Mammary epithelial cell (primary cell): ENCODE measurements at regions of chr1 and their contacts with region 1.

Region 1: GRCh38 chr1:201530741-201531531 is 8.0 kb upstream of the NAV1 start:
- DNase-seq: peak; percentile 70
- H3K4me3 ChIP-seq: no peak overlapping the region
- H3K27ac ChIP-seq: no peak overlapping the region
- H3K4me1 ChIP-seq: peaks cover 15% of the 10 kb centered on the region
- H3K27me3 ChIP-seq: no peaks in the 10 kb centered on the region
- CTCF ChIP-seq: peak; percentile 86 to 88

Region 2: GRCh38 chr1:201660931-201661822 is 130.2 kb after region 1 on chr1:
- CTCF ChIA-PET with region 1: no interaction called
- dilution Hi-C with region 1: no loop called
- in situ Hi-C with region 1: no loop called
- intact Hi-C with region 1: no loop called
- DNase-seq: no peak
- H3K4me3 ChIP-seq: no peak overlapping the region
- H3K27ac ChIP-seq: no peak overlapping the region
- H3K4me1 ChIP-seq: no peaks in the 10 kb centered on the region
- H3K27me3 ChIP-seq: no peaks in the 10 kb centered on the region
- CTCF ChIP-seq: no peak

Region 3: DNA sequence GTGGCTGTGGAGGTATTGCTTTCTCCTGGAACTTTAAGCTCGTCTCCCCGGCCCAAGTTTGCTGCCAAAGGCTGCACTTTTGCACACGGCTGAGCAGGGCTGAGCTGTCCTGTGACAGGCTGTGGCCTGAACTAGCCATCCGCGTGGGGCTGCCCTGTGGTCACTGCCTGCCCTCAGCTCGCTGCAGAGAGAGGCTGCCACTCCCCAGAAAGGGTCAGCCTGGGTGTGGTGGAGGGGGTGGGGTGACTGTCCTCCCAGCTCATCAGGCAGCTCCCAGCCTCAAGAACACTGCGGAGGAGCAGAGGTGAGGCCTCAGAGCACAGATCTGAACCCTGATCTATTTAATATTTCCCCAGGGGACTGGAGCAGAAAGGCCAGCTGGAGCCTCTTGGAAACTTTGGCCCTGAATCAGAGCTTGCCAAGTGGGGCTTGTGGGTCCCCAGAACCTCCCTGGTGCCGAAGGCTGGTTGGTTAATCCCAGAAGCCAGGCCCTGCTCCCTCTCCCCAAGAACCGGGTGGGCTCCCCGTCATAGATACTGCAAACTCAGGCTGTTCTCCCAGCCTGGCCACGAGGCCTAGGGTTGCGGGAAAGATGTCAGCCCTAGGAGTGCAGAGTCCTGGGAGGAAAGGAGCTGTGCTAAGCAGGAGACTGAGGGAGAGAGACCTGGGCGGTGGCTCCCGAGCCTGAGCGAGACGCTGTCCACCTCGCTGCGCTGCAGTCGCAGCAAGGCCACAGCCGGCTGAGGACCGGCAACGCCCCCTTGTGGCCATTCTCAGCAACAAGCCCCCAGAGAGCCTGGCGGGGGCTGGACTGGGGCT is 172.9 kb after region 1 on chr1:
- CTCF ChIA-PET with region 1: no interaction called
- dilution Hi-C with region 1: no loop called
- in situ Hi-C with region 1: no loop called
- intact Hi-C with region 1: loop called (anchors 1 kb)
- DNase-seq: peak; percentile 54
- H3K4me3 ChIP-seq: no peak overlapping the region
- H3K27ac ChIP-seq: no peak overlapping the region
- H3K4me1 ChIP-seq: no peaks in the 10 kb centered on the region
- H3K27me3 ChIP-seq: no peaks in the 10 kb centered on the region
- CTCF ChIP-seq: peak; percentile 86 to 98

Region 4: GRCh38 chr1:201792534-201793305 is 261.8 kb after region 1 on chr1:
- CTCF ChIA-PET with region 1: no interaction called
- dilution Hi-C with region 1: no loop called
- in situ Hi-C with region 1: no loop called
- intact Hi-C with region 1: loop called (anchors 1 kb)
- DNase-seq: peak; percentile 71
- H3K4me3 ChIP-seq: no peak overlapping the region
- H3K27ac ChIP-seq: no peak overlapping the region
- H3K4me1 ChIP-seq: peaks cover 23% of the 10 kb centered on the region
- H3K27me3 ChIP-seq: no peaks in the 10 kb centered on the region
- CTCF ChIP-seq: peak; percentile 99

Region 5: GRCh38 chr1:202112839-202113672 is 582.1 kb after region 1 on chr1:
- CTCF ChIA-PET with region 1: no interaction called
- dilution Hi-C with region 1: no loop called
- in situ Hi-C with region 1: no loop called
- intact Hi-C with region 1: loop called (anchors 2 kb)
- DNase-seq: peak; percentile 64
- H3K4me3 ChIP-seq: no peak overlapping the region
- H3K27ac ChIP-seq: peak overlapping the region; percentile 32
- H3K4me1 ChIP-seq: peaks cover 20% of the 10 kb centered on the region
- H3K27me3 ChIP-seq: no peaks in the 10 kb centered on the region
- CTCF ChIP-seq: no peak